ENCODE measurements at regions of chr17 and their contacts with region 1.

Region 1: DNA sequence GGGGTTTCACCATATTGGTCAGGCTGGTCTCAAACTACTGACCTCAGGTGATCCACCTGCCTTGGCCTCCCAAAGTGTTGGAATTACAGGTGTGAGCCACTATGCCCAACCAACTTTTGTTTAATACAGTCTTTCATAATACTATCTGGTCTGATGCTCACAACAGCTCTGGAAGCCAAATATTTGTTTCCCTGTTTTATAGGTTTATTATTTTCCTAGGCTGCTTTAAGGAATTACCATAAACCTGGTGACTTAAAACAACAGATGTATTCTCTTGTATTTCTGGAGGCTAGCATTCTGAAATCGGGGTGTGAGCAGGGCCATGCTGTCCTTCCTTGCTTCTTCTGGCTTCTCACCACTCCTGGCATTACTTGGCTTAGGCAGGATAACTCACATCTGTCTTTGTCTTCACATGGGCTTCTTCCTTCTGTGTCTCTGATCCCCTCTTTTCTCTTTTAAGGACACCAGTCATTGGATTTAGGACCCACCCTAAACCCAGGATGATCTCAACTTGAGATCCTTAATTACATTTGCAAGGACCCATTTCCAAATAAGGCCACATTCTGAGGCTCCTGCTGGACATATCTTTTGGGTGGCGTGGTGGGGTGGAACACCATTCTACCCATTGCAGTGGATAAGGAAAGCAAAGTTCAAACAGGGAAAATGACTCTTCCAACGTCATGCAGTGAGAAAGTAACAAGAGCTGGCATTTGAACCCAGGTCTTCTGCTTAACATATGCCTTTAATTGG is 39.3 kb upstream of the TBX2 start:
- DNase-seq: no peak
- H3K4me3 Mint-ChIP-seq: no peak overlapping the region
- H3K27ac Mint-ChIP-seq: no peak overlapping the region
- H3K4me1 Mint-ChIP-seq: no peaks in the 10 kb centered on the region
- H3K27me3 Mint-ChIP-seq: no peaks in the 10 kb centered on the region

Region 2: DNA sequence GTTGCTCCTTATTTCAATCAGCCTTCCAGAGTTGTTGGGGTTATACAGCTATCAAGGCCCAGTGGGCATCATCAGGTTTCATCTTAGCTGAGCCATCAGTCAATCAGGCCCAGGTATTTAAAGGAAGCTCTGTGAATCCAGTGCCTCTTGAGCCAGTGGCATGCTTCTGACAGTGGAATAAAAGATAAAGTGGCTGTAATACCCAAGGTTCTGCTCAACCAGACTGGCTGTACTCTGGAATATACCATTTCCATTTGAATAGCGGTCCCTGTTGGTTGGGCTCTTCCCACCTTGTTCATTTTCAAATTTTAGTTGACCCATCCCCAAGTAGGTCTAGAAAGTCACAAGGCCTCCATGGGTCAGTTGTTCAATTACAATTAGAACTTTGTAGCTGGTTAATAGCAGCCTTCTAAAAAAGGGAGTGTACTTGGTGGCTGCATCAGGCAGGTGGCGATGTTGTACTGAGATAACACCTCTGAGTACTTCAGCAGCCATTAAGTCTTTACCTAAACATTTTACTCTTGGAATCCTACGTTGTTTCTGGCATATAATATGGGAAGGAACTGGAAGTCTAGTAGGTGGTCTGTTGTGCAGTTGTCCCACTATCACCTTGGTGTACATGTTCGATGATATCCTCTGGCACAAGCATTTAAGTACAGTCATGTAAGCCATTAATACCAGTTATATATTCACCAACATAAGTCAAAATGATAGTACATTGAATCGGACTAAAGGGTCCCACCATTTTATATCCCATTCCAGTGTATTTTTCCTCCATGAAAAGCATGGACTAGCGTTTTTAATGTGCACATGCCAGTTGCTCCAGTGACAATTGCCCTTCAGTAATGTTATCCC is 388.6 kb before region 1 on chr17:
- CTCF ChIA-PET with region 1: interaction called, 17 read pairs
- POLR2A ChIA-PET with region 1: no interaction called
- DNase-seq: peak; percentile 53
- H3K4me3 Mint-ChIP-seq: no peak overlapping the region
- H3K27ac Mint-ChIP-seq: no peak overlapping the region
- H3K4me1 Mint-ChIP-seq: no peaks in the 10 kb centered on the region
- H3K27me3 Mint-ChIP-seq: peaks cover 4% of the 10 kb centered on the region

Region 3: GRCh38 chr17:61000911-61001310 is 359.5 kb before region 1 on chr17:
- CTCF ChIA-PET with region 1: interaction called, 19 read pairs
- POLR2A ChIA-PET with region 1: no interaction called
- DNase-seq: no peak
- H3K4me3 Mint-ChIP-seq: no peak overlapping the region
- H3K27ac Mint-ChIP-seq: no peak overlapping the region
- H3K4me1 Mint-ChIP-seq: peaks cover 3% of the 10 kb centered on the region
- H3K27me3 Mint-ChIP-seq: peaks cover 2% of the 10 kb centered on the region

Region 4: DNA sequence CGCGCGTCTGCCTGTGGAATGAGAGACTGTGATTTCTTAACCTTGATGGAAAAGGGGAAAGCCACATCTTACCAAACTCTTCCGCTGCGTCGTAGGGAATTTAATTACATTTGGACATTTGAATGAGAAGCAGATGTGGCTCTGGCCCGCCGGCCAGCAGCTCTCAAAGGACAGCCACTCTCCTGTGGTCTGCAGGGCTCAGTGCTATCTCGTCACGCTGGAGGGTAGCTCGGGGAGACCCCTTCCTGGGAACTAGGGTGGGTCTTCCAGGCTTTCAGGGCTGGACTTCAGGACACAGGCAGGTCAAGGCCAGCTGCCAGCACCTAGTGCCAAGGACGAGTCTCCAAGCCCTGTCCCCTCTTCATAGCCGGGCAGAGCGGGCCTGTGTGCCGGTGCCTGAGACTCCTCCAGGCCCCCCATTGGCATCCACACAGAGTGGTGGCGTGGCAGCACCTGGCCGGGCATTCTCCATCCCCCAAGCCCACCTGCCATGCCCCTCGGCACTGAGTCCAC is 23.4 kb after region 1 on chr17:
- CTCF ChIA-PET with region 1: no interaction called
- POLR2A ChIA-PET with region 1: no interaction called
- DNase-seq: no peak
- H3K4me3 Mint-ChIP-seq: no peak overlapping the region
- H3K27ac Mint-ChIP-seq: no peak overlapping the region
- H3K4me1 Mint-ChIP-seq: no peaks in the 10 kb centered on the region
- H3K27me3 Mint-ChIP-seq: no peaks in the 10 kb centered on the region

Measured in activated CD4-positive, alpha-beta memory T cell treated with anti-CD3 and anti-CD28 coated beads, Interleukin-2, amount 10 ng/mL, durations not matched to agents 7 days and 5 days (primary cell).